ENCODE measurements at regions of chr19 and their contacts with region 1.

Region 1: DNA sequence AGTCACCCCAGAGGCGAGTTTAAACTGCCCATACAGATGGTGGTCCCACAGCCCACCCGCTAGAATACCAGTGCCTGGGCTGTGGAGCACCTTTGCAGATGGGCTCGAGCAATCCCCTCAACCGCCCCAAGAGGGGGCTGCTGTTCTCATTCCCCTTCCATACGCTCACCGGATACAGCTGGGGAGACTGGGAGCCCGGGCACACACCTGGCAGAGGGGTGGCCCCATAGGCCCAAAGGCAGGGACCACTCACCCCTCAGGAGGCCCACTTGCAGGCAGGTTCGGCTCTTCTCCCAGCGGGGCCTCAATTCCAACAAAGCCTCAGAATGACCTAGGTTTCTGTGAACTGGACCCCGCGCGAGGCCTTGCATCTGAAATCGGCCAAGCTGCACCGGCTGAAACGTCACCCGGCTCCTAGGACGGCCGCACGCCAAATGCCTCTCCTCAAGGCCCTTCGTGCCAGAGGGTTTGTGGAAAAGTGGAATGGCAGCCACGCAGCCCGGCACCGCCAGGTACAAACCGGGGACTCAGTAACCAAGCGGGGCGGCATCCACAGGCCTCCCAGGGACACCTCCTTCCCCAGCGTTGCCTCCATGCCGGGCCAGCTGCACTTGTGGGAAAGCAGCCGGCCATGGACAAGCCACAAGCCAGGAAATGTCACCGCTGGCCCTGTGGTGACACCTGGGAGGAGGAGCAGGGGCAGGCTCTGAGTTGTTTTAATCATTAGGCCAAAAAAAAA is 18.7 kb downstream of the MLLT1 start:
- DNase-seq: peak in 8 of 9 experiments; percentile 19 to 66 (median 42)
- ATAC-seq: peak; percentile 71
- H3K4me3 ChIP-seq: no peak overlapping the region
- H3K4me3 Mint-ChIP-seq: peak overlapping the region; percentile 43
- H3K27ac ChIP-seq: no peak overlapping the region
- H3K27ac Mint-ChIP-seq: no peak overlapping the region
- H3K4me1 ChIP-seq: peaks cover 6% of the 10 kb centered on the region
- H3K4me1 Mint-ChIP-seq: peaks cover 26% of the 10 kb centered on the region
- H3K27me3 ChIP-seq: no peaks in the 10 kb centered on the region
- H3K27me3 Mint-ChIP-seq: no peaks in the 10 kb centered on the region
- CTCF ChIP-seq: peak; percentile 62

Region 2: GRCh38 chr19:6241680-6242377 is 19.3 kb before region 1 on chr19:
- CTCF ChIA-PET with region 1: no interaction called
- POLR2A ChIA-PET with region 1: no interaction called
- intact Hi-C with region 1: no loop called
- DNase-seq: no peak
- ATAC-seq: no peak
- H3K4me3 ChIP-seq: no peak overlapping the region
- H3K4me3 Mint-ChIP-seq: no peak overlapping the region
- H3K27ac ChIP-seq: no peak overlapping the region
- H3K27ac Mint-ChIP-seq: no peak overlapping the region
- H3K4me1 ChIP-seq: peaks cover 19% of the 10 kb centered on the region
- H3K4me1 Mint-ChIP-seq: peaks cover 41% of the 10 kb centered on the region
- H3K27me3 ChIP-seq: no peaks in the 10 kb centered on the region
- H3K27me3 Mint-ChIP-seq: no peaks in the 10 kb centered on the region
- CTCF ChIP-seq: no peak

Region 3: GRCh38 chr19:6273701-6274601 is 12.9 kb after region 1 on chr19:
- CTCF ChIA-PET with region 1: interaction called, 5 read pairs
- POLR2A ChIA-PET with region 1: no interaction called
- intact Hi-C with region 1: loop called in 1 of 2 experiments (anchors 2 kb)
- DNase-seq: no peak
- ATAC-seq: no peak
- H3K4me3 ChIP-seq: no peak overlapping the region
- H3K4me3 Mint-ChIP-seq: no peak overlapping the region
- H3K27ac ChIP-seq: no peak overlapping the region
- H3K27ac Mint-ChIP-seq: peak overlapping the region; percentile 74
- H3K4me1 ChIP-seq: peaks cover 29% of the 10 kb centered on the region
- H3K4me1 Mint-ChIP-seq: peaks cover 64% of the 10 kb centered on the region
- H3K27me3 ChIP-seq: no peaks in the 10 kb centered on the region
- H3K27me3 Mint-ChIP-seq: no peaks in the 10 kb centered on the region
- CTCF ChIP-seq: no peak